Heart left ventricle (tissue), 16 donors: ENCODE measurements at regions of chr4 and their contacts with region 1.

Region 1: DNA sequence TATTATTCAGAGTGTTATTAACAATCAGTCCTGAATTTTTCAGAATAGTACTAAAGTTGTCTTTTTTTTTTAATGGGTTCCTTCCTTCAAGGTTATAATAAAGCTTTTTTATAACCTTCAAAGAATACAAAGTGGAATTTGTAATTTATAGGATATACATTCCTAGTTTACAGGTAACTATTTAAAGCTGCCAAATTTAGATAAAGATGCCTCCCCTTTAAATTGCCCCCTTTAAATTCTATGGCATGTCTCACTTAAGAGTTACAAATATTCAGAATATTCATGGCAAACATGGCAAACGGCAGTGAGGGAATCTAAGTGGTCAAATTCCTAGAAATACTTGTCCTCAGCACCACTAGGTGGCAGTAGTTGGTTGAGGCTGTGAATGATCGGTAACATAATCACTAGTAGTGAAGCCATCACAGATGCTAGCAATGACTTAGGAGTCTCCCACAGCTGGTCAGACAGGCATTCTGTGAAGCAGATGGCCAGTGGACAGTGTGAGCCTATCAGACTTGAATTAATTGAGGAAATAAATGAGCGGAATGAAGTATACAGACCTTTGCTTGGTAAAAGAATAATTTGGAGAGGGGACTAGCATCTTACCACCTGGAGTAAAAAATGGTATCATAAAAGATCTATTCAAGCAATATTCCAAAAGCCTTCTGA is 86.4 kb downstream of the CBR4 start:
- DNase-seq: peak in 3 of 5 donors; percentile 36 to 56 (median 49)
- ATAC-seq: peak in 3 of 4 donors; percentile 25 to 47 (median 26)
- H3K4me3 ChIP-seq: no peak overlapping the region
- H3K27ac ChIP-seq: no peak overlapping the region
- H3K4me1 ChIP-seq: peaks cover 0 to 17% (median 0%) of the 10 kb centered on the region in 12 donors
- H3K27me3 ChIP-seq: no peaks in the 10 kb centered on the region
- CTCF ChIP-seq: peak; percentile 64 to 89 (median 72)
- POLR2A ChIP-seq: no peak

Region 2: GRCh38 chr4:168514249-168514852 is 409.3 kb before region 1 on chr4:
- intact Hi-C with region 1: loop called in 8 of 10 experiments (anchors 2 to 10 kb)
- DNase-seq: no peak
- ATAC-seq: no peak
- H3K4me3 ChIP-seq: peak overlapping the region in 1 of 12 donors; percentile 25
- H3K27ac ChIP-seq: peak overlapping the region in 2 of 12 donors; percentile 60 to 65
- H3K4me1 ChIP-seq: peaks cover 0 to 47% (median 15%) of the 10 kb centered on the region in 12 donors
- H3K27me3 ChIP-seq: no peaks in the 10 kb centered on the region
- CTCF ChIP-seq: peak; percentile 25 to 66 (median 54)
- POLR2A ChIP-seq: no peak

Region 3: DNA sequence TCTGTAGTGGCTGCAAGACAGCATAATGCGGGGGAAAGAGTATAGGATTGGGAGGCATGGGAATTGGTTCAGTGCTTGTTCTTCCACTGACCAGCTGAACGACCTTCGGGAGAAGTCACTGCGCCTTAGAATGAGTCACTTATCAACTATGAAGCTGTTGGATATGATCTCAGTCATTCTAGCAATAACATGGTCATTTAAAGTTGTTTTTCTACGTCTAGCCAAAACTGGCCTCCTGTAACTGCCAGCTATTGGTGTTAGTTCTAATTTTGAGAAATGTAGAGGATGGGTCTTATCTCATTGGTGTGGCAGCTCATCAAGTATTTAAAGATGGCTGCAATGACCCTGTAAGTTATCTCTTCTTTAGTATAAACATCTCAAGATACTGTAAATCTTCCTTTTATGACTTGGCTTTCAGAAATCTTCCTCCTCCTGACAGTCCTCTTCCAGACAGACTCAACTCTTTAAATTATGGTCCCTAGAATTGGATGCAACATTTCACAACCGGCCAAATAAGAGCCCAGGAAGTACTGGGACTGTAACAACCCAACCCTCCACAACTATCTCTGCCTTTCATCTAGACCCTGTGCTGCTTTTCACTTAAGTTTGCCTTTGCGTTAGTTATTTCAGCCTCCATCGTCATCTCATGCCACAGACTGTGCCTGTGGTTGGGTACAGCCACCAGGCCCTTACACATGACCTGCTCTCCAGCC is 156.9 kb before region 1 on chr4:
- intact Hi-C with region 1: no loop called
- DNase-seq: no peak
- ATAC-seq: peak in 3 of 4 donors; percentile 10 to 60 (median 41)
- H3K4me3 ChIP-seq: no peak overlapping the region
- H3K27ac ChIP-seq: peak overlapping the region; percentile 3 to 83 (median 56)
- H3K4me1 ChIP-seq: peaks cover 0 to 53% (median 33%) of the 10 kb centered on the region in 12 donors
- H3K27me3 ChIP-seq: no peaks in the 10 kb centered on the region
- CTCF ChIP-seq: no peak
- POLR2A ChIP-seq: no peak

Region 4: GRCh38 chr4:168995537-168996295 is 72.1 kb after region 1 on chr4:
- intact Hi-C with region 1: loop called in 4 of 10 experiments (anchors 10 kb)
- DNase-seq: no peak
- ATAC-seq: peak; percentile 54 to 78 (median 72)
- H3K4me3 ChIP-seq: no peak overlapping the region
- H3K27ac ChIP-seq: no peak overlapping the region
- H3K4me1 ChIP-seq: peaks cover 0 to 32% (median 10%) of the 10 kb centered on the region in 12 donors
- H3K27me3 ChIP-seq: no peaks in the 10 kb centered on the region
- CTCF ChIP-seq: peak in 8 of 12 donors; percentile 19 to 52 (median 38)
- POLR2A ChIP-seq: no peak

Region 5: GRCh38 chr4:169485791-169486742 is 562.4 kb after region 1 on chr4:
- intact Hi-C with region 1: loop called in 9 of 10 experiments (anchors 1 to 10 kb)
- DNase-seq: no peak
- ATAC-seq: peak in 2 of 4 donors; percentile 53 to 63
- H3K4me3 ChIP-seq: peak overlapping the region in 1 of 12 donors; percentile 8
- H3K27ac ChIP-seq: no peak overlapping the region
- H3K4me1 ChIP-seq: peaks cover 0 to 5% (median 0%) of the 10 kb centered on the region in 12 donors
- H3K27me3 ChIP-seq: no peaks in the 10 kb centered on the region
- CTCF ChIP-seq: peak; percentile 18 to 72 (median 58)
- POLR2A ChIP-seq: no peak

Region 6: GRCh38 chr4:169566021-169566818 is 642.6 kb after region 1 on chr4:
- intact Hi-C with region 1: loop called in 3 of 10 experiments (anchors 2 to 10 kb)
- DNase-seq: peak in 2 of 5 donors; percentile 17 to 32
- ATAC-seq: peak; percentile 61 to 78 (median 75)
- H3K4me3 ChIP-seq: peak overlapping the region in 4 of 12 donors; percentile 8 to 26 (median 13)
- H3K27ac ChIP-seq: peak overlapping the region in 2 of 12 donors; percentile 0 to 17
- H3K4me1 ChIP-seq: peaks cover 0 to 17% (median 6%) of the 10 kb centered on the region in 12 donors
- H3K27me3 ChIP-seq: no peaks in the 10 kb centered on the region
- CTCF ChIP-seq: peak; percentile 56 to 86 (median 72)
- POLR2A ChIP-seq: no peak